ENCODE measurements at regions of chr6 and their contacts with region 1.

Region 1: DNA sequence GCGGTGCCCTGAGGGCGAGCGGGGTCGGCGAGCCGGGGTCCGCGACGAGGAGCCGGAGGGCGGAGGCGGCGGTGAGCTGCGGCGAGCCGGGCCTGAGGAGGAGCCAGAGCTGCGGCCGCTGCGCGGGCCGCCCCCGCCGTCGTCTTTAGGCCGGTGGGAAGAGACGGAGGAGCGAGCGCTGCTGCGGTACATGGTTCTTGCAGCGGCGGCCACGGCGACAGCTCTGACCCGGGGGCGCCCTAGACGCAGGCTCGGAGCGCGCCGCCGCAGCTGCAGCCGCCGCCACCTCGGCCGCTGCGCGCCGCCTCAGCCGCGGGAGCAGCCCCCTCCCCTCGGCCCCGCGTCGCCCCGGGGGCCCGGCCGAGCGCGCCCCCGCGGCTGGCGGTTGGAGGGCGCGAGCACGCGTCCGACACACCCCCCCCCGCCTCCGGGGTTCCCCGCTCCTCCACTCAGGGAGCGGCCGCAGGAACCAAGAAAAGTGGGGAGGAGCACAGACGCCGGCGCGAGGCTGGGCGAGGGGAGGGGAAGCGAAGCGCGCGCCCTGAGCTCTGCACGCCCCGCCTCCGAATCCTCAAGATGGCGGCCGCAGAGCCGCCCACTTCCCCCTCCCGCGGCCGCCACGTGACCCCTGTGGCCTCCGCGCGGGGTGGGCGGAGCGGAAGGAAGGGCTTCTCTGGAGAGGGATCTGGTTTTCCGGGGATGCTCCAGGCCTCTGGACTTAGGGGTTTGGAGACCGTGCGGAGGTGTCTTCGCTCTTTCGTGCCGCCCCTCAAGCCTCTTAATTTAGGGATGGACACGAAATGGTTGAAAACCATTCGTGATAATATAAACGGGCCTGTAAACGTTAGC is at the start of gene ZNF318:
- DNase-seq: peak; percentile 98
- ATAC-seq: peak; percentile 90
- H3K4me3 ChIP-seq: peak within 1 kb of the TSS; percentile 83 to 95 (median 88)
- H3K4me3 Mint-ChIP-seq: peak within 1 kb of the TSS; percentile 98
- H3K27ac ChIP-seq: peak within 1 kb of the TSS; percentile 92 to 94
- H3K27ac Mint-ChIP-seq: peak within 1 kb of the TSS; percentile 97
- H3K4me1 ChIP-seq: peaks cover 64 to 69% of the 10 kb centered on the region in 2 donors
- H3K4me1 Mint-ChIP-seq: peaks cover 72% of the 10 kb centered on the region
- H3K27me3 ChIP-seq: no peaks in the 10 kb centered on the region
- H3K27me3 Mint-ChIP-seq: no peaks in the 10 kb centered on the region
- CTCF ChIP-seq: no peak
- total RNA-seq, gene ZNF318: 79.7 and 80.9 TPM in 2 replicates

Region 2: DNA sequence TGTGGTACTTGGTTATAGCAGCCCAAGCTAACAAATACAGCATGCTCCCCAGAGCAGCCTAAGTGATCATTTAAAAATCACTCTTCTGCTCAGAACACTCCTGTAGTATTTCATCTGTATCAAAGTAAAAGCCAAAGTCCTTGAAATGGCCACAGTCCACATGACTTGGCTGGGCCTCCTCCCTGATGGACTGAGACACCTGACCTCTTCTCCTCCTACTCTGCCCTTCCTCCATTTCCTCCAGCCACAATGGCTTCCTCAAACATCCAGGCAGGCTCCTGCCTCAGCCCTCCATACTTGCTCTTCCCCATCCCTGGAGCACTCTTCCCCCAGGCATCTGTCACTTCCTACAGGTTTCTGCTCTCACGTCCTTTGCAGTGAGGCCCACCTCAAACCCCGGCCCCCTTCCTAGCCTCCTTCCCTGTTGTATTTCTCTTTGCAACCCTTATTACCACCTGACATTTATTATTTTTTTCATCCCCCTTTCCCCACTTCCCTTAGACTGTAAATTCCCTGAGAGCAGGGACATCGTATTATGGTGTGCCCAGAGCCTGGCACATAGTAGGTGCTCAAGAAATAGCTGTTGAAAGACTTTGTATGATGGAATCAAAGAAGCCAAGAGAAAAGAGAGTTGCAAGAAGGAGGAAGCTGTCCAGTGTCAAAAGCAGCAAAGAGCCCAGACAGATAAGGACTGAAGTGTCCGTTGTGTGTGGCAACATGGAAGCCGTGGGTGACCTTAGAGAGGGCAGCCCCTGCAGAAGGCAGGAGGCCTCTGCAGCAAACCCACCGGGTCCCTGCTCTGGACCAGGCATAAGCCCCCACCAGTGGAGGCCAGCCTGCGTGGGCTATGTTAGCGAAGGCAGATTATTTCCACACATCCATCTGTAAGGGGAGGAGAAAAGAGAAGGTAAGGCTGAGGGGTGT is 1005.2 kb before region 1 on chr6:
- CTCF ChIA-PET with region 1: no interaction called
- POLR2A ChIA-PET with region 1: no interaction called
- intact Hi-C with region 1: no loop called
- DNase-seq: no peak
- ATAC-seq: no peak
- H3K4me3 ChIP-seq: no peak overlapping the region
- H3K4me3 Mint-ChIP-seq: no peak overlapping the region
- H3K27ac ChIP-seq: no peak overlapping the region
- H3K27ac Mint-ChIP-seq: no peak overlapping the region
- H3K4me1 ChIP-seq: peaks cover 22 to 43% of the 10 kb centered on the region in 2 donors
- H3K4me1 Mint-ChIP-seq: peaks cover 33% of the 10 kb centered on the region
- H3K27me3 ChIP-seq: no peaks in the 10 kb centered on the region
- H3K27me3 Mint-ChIP-seq: no peaks in the 10 kb centered on the region
- CTCF ChIP-seq: no peak

Region 3: GRCh38 chr6:43383021-43383667 is 13.7 kb after region 1 on chr6:
- CTCF ChIA-PET with region 1: interaction called, 54 read pairs
- POLR2A ChIA-PET with region 1: interaction called, 56 read pairs
- intact Hi-C with region 1: loop called (anchors 1 kb)
- DNase-seq: no peak
- ATAC-seq: no peak
- H3K4me3 ChIP-seq: peak overlapping the region in 2 of 5 experiments; percentile 18 to 42
- H3K4me3 Mint-ChIP-seq: peak overlapping the region; percentile 85
- H3K27ac ChIP-seq: peak overlapping the region; percentile 91 to 94
- H3K27ac Mint-ChIP-seq: peak overlapping the region; percentile 98
- H3K4me1 ChIP-seq: peaks cover 68 to 73% of the 10 kb centered on the region in 2 donors
- H3K4me1 Mint-ChIP-seq: peaks cover 67% of the 10 kb centered on the region
- H3K27me3 ChIP-seq: peaks cover 0 to 4% (median 2%) of the 10 kb centered on the region in 4 experiments
- H3K27me3 Mint-ChIP-seq: peaks cover 12% of the 10 kb centered on the region
- CTCF ChIP-seq: no peak

Region 4: DNA sequence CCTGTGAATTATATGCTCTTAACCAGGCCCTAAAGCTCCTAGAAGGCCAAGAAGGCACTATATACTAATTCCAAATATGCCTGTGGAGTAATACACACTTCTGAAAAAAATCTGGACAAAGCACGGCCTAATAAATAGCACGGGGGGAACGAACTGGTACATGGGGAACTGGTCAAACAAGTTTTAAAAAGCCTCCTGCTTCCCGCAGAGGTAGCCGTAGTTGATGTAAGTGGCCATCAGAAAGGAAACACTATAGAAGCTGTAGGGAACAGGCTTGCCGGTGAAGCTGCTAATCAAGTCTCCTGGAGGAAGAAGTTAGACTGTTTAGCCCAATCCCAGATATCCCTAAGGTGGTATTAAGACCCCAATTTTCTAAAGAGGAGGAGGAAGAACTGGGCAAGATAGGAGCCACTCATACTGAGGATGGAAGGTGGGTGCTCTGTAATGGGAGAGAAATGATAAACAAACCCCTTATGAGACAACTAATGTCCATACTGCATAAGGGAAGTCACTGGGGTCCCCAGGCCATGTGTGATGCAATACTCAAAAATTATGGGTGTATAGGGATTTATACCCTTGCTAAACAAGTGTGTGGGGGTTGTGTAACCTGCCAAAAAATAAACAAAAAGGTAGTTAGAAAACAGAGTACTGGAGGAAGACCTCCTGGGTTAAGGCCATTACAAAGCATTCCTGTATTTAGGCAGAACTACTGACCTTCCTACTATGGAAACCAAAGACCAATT is 27.2 kb after region 1 on chr6:
- CTCF ChIA-PET with region 1: interaction called, 27 read pairs
- POLR2A ChIA-PET with region 1: interaction called, 3 read pairs
- intact Hi-C with region 1: loop called (anchors 2 kb)
- DNase-seq: no peak
- ATAC-seq: no peak
- H3K4me3 ChIP-seq: no peak overlapping the region
- H3K4me3 Mint-ChIP-seq: no peak overlapping the region
- H3K27ac ChIP-seq: no peak overlapping the region
- H3K27ac Mint-ChIP-seq: no peak overlapping the region
- H3K4me1 ChIP-seq: peaks cover 20 to 22% of the 10 kb centered on the region in 2 donors
- H3K4me1 Mint-ChIP-seq: peaks cover 27% of the 10 kb centered on the region
- H3K27me3 ChIP-seq: peaks cover 0 to 5% (median 0%) of the 10 kb centered on the region in 4 experiments
- H3K27me3 Mint-ChIP-seq: no peaks in the 10 kb centered on the region
- CTCF ChIP-seq: no peak

Region 5: GRCh38 chr6:43575772-43576551 is 206.6 kb after region 1 on chr6 and contains the starts of genes POLH and XPO5:
- CTCF ChIA-PET with region 1: no interaction called
- POLR2A ChIA-PET with region 1: no interaction called
- intact Hi-C with region 1: loop called (anchors 5 kb)
- DNase-seq: peak; percentile 95
- ATAC-seq: peak; percentile 94
- H3K4me3 ChIP-seq: peak within 1 kb of the TSS; percentile 81 to 99 (median 98)
- H3K4me3 Mint-ChIP-seq: peak within 1 kb of the TSS; percentile 94
- H3K27ac ChIP-seq: peak within 1 kb of the TSS; percentile 49 to 80
- H3K27ac Mint-ChIP-seq: peak within 1 kb of the TSS; percentile 91
- H3K4me1 ChIP-seq: peaks cover 28 to 40% of the 10 kb centered on the region in 2 donors
- H3K4me1 Mint-ChIP-seq: peaks cover 36% of the 10 kb centered on the region
- H3K27me3 ChIP-seq: no peaks in the 10 kb centered on the region
- H3K27me3 Mint-ChIP-seq: no peaks in the 10 kb centered on the region
- CTCF ChIP-seq: no peak
- total RNA-seq, gene POLH: 24.8 and 26.4 TPM in 2 replicates
- total RNA-seq, gene XPO5: 45.7 and 48.1 TPM in 2 replicates

Measured in B cell (primary cell).